Activated CD8-positive, alpha-beta T cell treated with anti-CD3 and anti-CD28 coated beads for 36 hours (primary cell): ENCODE measurements at regions of chr5 and their contacts with region 1.

Region 1: DNA sequence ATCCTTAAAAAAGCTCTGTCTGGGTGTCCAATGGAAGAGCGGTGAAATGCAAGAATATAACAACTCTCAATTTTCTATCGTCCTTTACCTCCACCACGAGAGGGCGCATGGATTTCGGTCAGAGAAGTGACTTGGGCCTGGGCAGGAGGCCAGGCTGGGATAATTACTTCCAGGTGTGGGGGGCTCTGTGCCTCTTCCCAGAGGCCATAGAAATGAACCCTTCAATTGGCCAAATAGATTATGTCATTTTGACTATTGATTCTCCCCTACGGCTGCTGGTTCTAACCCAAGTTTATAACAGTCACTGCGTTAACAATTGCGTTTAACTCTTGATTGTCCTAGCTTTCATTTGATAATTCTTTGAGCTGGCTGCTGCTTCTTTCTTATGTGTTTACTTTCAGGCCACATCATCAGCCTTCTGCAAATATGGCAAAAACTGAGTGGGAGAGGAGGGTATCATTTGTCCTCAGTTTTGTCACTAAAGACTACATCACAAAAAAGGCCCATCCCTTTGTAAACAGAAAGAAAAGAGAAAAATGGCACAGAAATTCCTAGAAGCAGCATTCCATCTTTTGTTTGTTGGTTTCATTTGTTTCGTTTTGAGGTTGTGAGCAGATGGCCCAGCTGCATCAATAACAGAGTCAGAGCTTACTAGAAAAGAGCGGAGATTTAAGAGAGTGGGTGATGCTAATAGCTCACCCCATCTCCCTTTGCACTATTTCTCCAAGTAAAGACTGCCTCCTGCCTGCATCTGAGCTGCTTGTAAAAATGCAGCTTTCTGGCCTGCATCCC is 45.4 kb upstream of the ZFR start:
- DNase-seq: peak; percentile 76
- ATAC-seq: peak; percentile 76
- H3K4me3 Mint-ChIP-seq: no peak overlapping the region
- H3K27ac Mint-ChIP-seq: no peak overlapping the region
- H3K4me1 Mint-ChIP-seq: no peaks in the 10 kb centered on the region
- H3K27me3 Mint-ChIP-seq: no peaks in the 10 kb centered on the region
- CTCF ChIP-seq: peak; percentile 93

Region 2: GRCh38 chr5:32471784-32472183 is 18.2 kb before region 1 on chr5:
- CTCF ChIA-PET with region 1: interaction called, 23 read pairs
- POLR2A ChIA-PET with region 1: no interaction called
- intact Hi-C with region 1: no loop called
- DNase-seq: no peak
- ATAC-seq: no peak
- H3K4me3 Mint-ChIP-seq: no peak overlapping the region
- H3K27ac Mint-ChIP-seq: no peak overlapping the region
- H3K4me1 Mint-ChIP-seq: no peaks in the 10 kb centered on the region
- H3K27me3 Mint-ChIP-seq: no peaks in the 10 kb centered on the region
- CTCF ChIP-seq: no peak

Region 3: DNA sequence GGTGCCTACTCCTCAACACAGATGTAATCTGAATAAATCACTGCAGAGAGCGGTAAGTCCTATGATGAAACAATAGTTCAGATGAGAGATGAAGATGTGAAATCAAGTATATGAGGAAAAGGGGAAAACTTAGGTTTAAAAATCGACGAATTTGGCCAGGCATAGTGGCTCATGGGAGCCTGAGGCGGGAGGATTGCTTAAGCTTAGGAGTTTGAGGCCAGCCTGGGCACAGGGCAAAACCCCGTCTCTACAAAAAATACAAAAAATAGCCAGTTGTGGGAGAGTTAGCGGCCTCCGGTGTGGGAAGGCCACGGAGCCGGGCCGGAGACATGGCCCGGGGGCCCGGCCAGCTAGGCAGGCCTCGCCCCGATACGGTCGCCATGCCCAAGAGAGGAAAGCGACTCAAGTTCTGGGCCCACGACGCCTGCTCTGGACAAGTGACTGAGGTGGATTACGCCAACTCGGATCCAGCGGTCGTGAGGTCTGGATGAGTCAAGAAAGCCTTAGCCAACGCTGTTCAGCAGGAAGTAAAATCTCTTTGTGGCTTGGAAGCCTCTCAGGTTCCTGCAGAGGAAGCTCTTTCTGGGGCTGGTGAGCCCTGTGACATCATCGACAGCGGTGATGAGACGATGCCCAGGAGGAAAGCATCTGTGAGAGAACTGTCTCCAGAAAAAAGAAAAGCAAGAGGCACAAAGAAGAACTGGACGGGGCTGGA is 32.6 kb after region 1 on chr5:
- CTCF ChIA-PET with region 1: interaction called, 12 read pairs
- POLR2A ChIA-PET with region 1: no interaction called
- intact Hi-C with region 1: no loop called
- DNase-seq: peak; percentile 37
- ATAC-seq: peak; percentile 68
- H3K4me3 Mint-ChIP-seq: no peak overlapping the region
- H3K27ac Mint-ChIP-seq: no peak overlapping the region
- H3K4me1 Mint-ChIP-seq: no peaks in the 10 kb centered on the region
- H3K27me3 Mint-ChIP-seq: no peaks in the 10 kb centered on the region
- CTCF ChIP-seq: no peak

Region 4: DNA sequence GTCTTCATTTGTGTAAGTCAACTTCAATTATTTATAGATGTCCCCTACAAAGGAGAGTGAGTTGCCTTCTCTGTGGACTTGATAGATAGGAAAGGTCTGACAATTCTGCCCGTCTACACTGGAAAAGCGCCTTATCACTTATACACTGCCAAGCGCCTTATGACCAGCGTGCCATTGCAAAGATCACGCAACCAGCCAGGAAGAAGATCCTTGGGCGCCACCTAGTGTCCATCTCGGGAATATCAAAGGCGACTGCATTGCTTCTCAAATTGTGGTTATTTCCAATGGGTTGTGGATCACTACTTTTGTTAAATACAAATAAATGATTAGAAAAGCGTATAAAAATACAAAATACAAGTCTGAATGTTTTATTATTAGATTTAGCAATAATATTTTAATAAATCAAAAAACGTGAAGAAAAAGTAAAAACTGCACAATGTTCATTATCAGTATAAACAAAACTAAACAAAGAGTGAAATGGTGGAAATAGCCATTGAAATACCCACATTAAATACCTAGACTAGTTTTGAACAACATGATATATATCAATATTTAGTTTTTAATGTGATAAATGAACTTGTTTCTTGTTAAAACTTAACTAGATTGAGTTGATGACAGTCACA is 123.2 kb after region 1 on chr5:
- CTCF ChIA-PET with region 1: interaction called, 69 read pairs
- POLR2A ChIA-PET with region 1: no interaction called
- intact Hi-C with region 1: loop called (anchors 1 kb)
- DNase-seq: peak; percentile 92
- ATAC-seq: peak; percentile 95
- H3K4me3 Mint-ChIP-seq: no peak overlapping the region
- H3K27ac Mint-ChIP-seq: peak overlapping the region; percentile 18
- H3K4me1 Mint-ChIP-seq: peaks cover 2% of the 10 kb centered on the region
- H3K27me3 Mint-ChIP-seq: no peaks in the 10 kb centered on the region
- CTCF ChIP-seq: peak; percentile 96

Region 5: GRCh38 chr5:33330426-33330825 is 840.4 kb after region 1 on chr5:
- CTCF ChIA-PET with region 1: no interaction called
- POLR2A ChIA-PET with region 1: no interaction called
- intact Hi-C with region 1: no loop called
- DNase-seq: no peak
- ATAC-seq: no peak
- H3K4me3 Mint-ChIP-seq: no peak overlapping the region
- H3K27ac Mint-ChIP-seq: no peak overlapping the region
- H3K4me1 Mint-ChIP-seq: no peaks in the 10 kb centered on the region
- H3K27me3 Mint-ChIP-seq: peaks cover 2% of the 10 kb centered on the region
- CTCF ChIP-seq: no peak